IMR-90 (cell line): ENCODE measurements at regions of chr3 and their contacts with region 1.

Region 1: GRCh38 chr3:196684548-196685407 is 27.3 kb downstream of the CEP19 start:
- DNase-seq: peak; percentile 47
- ATAC-seq: peak; percentile 76
- H3K4me3 ChIP-seq: no peak overlapping the region
- H3K27ac ChIP-seq: no peak overlapping the region
- H3K4me1 ChIP-seq: peaks cover 4% of the 10 kb centered on the region; the same call in 1 of the 2 replicates
- H3K27me3 ChIP-seq: peaks cover 8% of the 10 kb centered on the region
- CTCF ChIP-seq: peak; percentile 88
- POLR2A ChIP-seq: no peak
- RAD21 ChIP-seq: peak; percentile 88

Region 2: GRCh38 chr3:196609343-196609775 is 75.4 kb before region 1 on chr3:
- CTCF ChIA-PET with region 1: interaction called, 13 read pairs
- POLR2A ChIA-PET with region 1: no interaction called
- dilution Hi-C with region 1: no loop called
- in situ Hi-C with region 1: loop called (anchors 5 kb)
- intact Hi-C with region 1: loop called (anchors 1 kb)
- DNase-seq: peak; percentile 63
- ATAC-seq: peak; percentile 98
- H3K4me3 ChIP-seq: no peak overlapping the region
- H3K27ac ChIP-seq: no peak overlapping the region
- H3K4me1 ChIP-seq: no peaks in the 10 kb centered on the region
- H3K27me3 ChIP-seq: peaks cover 7% of the 10 kb centered on the region
- CTCF ChIP-seq: peak; percentile 83
- POLR2A ChIP-seq: 0 out of 2 replicates have a peak, but pooled peaks have one; percentile 33
- RAD21 ChIP-seq: peak; percentile 92

Region 3: DNA sequence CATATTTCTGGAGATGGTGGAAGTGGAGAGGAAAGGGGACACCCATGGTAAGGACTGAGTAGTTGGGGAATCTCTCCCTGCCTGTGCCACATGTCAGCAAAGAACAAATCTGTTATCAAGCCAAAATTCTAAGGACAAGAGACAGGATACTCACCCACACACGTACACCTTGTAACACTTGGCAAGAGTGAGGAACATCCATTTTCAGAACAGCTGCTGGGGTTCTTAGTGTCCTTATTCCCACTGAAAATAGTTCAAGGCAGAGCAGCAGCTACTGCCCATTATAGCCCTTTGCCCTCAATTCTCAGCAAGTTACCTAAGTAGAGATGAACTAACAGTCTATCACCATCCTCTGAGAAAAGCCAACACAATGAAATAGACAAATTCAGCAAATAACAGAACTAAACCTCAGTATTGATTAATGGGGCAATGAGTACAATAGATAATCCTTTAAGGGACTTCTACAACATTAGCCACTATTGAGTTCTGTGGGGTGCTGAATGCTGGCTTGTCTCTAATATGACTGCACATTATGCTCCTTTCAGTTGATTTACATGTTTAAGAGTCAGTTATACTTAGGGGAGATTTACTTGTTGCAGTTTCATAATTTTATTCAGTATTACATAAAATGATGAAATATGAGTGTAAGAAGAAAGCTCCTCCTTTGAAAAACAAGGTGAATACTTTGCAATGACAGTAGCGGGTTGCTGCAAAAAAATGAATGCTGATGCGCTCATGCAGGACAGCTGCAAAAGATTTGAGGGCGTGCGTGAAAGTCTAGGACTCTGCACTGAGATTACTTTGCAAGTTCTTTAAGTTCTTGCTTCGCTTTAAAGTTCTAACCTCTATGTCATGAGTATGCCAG is 205.3 kb after region 1 on chr3:
- CTCF ChIA-PET with region 1: no interaction called
- POLR2A ChIA-PET with region 1: no interaction called
- dilution Hi-C with region 1: no loop called
- in situ Hi-C with region 1: no loop called
- intact Hi-C with region 1: no loop called
- DNase-seq: no peak
- ATAC-seq: no peak
- H3K4me3 ChIP-seq: no peak overlapping the region
- H3K27ac ChIP-seq: no peak overlapping the region
- H3K4me1 ChIP-seq: peaks cover 2% of the 10 kb centered on the region; the same call in 1 of the 2 replicates
- H3K27me3 ChIP-seq: no peaks in the 10 kb centered on the region
- CTCF ChIP-seq: no peak
- POLR2A ChIP-seq: no peak
- RAD21 ChIP-seq: no peak